Common myeloid progenitor, CD34-positive (primary cell): ENCODE measurements at regions of chr10 and their contacts with region 1.

Region 1: GRCh38 chr10:26881600-26882331 is 21.0 kb upstream of the ABI1 start:
- DNase-seq: peak; percentile 32 to 70 (median 70)
- H3K4me3 ChIP-seq: no peak overlapping the region
- H3K27ac ChIP-seq: no peak overlapping the region
- H3K4me1 ChIP-seq: no peaks in the 10 kb centered on the region
- H3K27me3 ChIP-seq: peaks cover 0 to 13% (median 0%) of the 10 kb centered on the region in 5 experiments

Region 2: GRCh38 chr10:26733750-26734568 is 147.8 kb before region 1 on chr10:
- CTCF ChIA-PET with region 1: interaction called, 189 read pairs
- POLR2A ChIA-PET with region 1: no interaction called
- DNase-seq: no peak
- H3K4me3 ChIP-seq: no peak overlapping the region
- H3K27ac ChIP-seq: no peak overlapping the region
- H3K4me1 ChIP-seq: peaks cover 0 to 5% (median 0%) of the 10 kb centered on the region in 4 experiments
- H3K27me3 ChIP-seq: no peaks in the 10 kb centered on the region

Region 3: GRCh38 chr10:26860443-26861204 is 21.1 kb before region 1 on chr10 and contains the start of gene ABI1:
- CTCF ChIA-PET with region 1: interaction called, 26 read pairs
- POLR2A ChIA-PET with region 1: no interaction called
- DNase-seq: peak; percentile 99 to 100 (median 99)
- H3K4me3 ChIP-seq: peak within 1 kb of the TSS; percentile 94 to 100 (median 97)
- H3K27ac ChIP-seq: peak within 1 kb of the TSS; percentile 89 to 96
- H3K4me1 ChIP-seq: peaks cover 17 to 34% (median 24%) of the 10 kb centered on the region in 4 experiments
- H3K27me3 ChIP-seq: no peaks in the 10 kb centered on the region

Region 4: DNA sequence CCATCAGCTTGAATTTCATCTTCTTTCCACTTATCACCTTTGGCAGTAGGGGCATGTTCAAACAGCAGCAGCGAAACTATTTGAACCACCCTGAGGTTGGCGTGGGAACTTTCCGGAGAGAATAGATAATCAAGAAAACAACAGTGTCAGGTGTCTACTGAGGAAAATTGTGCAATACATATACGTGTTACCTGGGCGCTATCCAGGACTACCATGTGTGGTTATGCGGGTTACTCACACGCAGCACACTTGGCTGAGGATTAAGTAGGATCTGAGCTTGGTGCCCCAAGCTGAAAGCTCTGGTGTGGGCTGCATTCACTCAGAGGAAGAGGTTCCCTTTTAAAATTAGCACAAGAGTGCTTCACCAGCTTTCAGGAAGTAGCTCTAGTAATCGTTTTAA is 12.2 kb before region 1 on chr10:
- CTCF ChIA-PET with region 1: interaction called, 26 read pairs
- POLR2A ChIA-PET with region 1: no interaction called
- DNase-seq: peak in 2 of 3 donors; percentile 42 to 44
- H3K4me3 ChIP-seq: no peak overlapping the region
- H3K27ac ChIP-seq: no peak overlapping the region
- H3K4me1 ChIP-seq: peaks cover 0 to 12% (median 1%) of the 10 kb centered on the region in 4 experiments
- H3K27me3 ChIP-seq: no peaks in the 10 kb centered on the region